ENCODE measurements at regions of chr3 and their contacts with region 1.

Region 1: DNA sequence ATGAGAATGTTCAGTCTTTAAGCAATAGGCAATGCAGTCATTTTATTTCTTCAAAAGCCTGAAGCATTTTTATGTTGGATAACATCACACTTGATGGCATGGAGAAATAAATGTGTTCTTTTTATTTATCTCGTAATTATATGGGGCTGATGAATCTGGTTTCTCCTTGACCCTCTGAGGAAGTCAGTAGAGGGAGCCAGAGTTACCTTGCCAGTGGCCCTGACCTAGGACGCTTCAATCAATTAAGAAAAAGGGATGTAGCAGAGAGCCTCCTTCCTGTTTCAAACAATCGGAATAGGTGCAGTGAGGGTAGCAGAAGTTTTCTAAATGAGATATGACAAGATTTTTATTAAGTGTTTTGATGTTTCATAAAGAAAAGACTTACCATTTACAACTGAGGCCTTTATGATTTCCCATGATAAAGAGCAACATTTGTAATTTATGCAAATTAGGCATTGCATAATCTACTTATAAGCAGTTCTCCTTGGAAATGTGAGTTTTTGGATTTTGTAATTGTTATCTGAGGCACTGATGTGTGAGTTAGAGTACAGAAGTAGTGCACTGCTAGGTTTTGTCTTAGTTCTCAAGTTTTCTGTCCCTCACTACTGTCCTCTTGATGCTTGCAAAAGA is 129.1 kb downstream of the RAP2B start:
- DNase-seq: peak; percentile 12
- ATAC-seq: peak; percentile 65; the same call in 2 of the 3 replicates
- H3K4me3 ChIP-seq: no peak overlapping the region
- H3K27ac ChIP-seq: no peak overlapping the region
- H3K4me1 ChIP-seq: no peaks in the 10 kb centered on the region
- H3K27me3 ChIP-seq: no peaks in the 10 kb centered on the region
- CTCF ChIP-seq: peak; percentile 42; the same call in 1 of the 2 replicates
- EP300 ChIP-seq: no peak
- POLR2A ChIP-seq: no peak
- RAD21 ChIP-seq: no peak

Region 2: DNA sequence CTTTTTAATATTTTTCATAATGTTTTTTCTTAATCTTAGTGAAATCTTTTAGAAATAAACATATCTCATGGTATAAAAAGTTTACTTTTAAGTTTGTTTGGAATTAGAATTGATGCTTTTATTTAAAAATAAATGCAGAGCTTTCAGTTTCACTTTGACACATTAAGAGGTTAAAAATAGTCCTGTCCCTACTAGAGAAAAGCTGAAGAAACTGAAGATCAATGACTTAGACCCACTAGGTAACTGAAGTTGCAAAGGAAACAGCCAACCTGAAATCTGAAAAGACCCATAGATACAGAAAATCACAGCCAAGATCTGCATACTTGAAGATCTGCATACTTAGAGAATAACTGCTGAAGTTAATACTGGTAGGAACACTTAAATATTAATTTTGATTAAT is 108.5 kb after region 1 on chr3:
- CTCF ChIA-PET with region 1: no interaction called
- POLR2A ChIA-PET with region 1: no interaction called
- in situ Hi-C with region 1: no loop called
- intact Hi-C with region 1: no loop called
- DNase-seq: no peak
- ATAC-seq: no peak
- H3K4me3 ChIP-seq: no peak overlapping the region
- H3K27ac ChIP-seq: no peak overlapping the region
- H3K4me1 ChIP-seq: no peaks in the 10 kb centered on the region
- H3K27me3 ChIP-seq: no peaks in the 10 kb centered on the region
- CTCF ChIP-seq: no peak
- EP300 ChIP-seq: no peak
- POLR2A ChIP-seq: no peak
- RAD21 ChIP-seq: no peak

Region 3: DNA sequence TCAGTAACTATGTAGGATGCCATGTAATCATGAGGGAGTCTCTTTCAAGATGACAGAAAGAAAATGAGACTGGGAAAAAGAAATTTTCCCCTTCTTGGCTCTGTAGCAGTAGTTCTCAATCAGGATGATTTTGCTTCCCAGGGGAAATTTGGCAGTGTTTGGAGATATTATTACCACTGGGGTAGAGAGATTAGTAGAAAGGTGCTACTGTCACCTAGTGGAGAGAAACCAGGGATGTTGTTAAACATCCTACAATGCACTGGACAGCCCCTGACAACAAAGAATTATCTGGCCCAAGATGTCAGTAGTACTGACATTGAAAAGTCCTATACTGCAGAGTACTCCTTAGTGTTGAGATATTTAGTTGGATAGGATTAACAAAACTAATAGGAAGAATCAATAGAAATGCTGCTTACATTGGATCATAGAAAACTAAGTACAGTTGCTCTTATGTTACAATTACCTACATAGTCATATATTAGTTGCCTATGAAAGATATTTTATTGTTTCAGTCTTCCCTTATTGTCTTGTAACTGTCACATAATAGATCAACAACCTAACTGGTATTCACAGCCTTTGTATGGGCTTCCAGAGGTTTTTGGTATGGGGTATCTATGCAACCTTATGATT is 304.1 kb after region 1 on chr3:
- CTCF ChIA-PET with region 1: no interaction called
- POLR2A ChIA-PET with region 1: no interaction called
- in situ Hi-C with region 1: no loop called
- intact Hi-C with region 1: loop called (anchors 2 kb)
- DNase-seq: peak; percentile 18
- ATAC-seq: peak; percentile 77
- H3K4me3 ChIP-seq: no peak overlapping the region
- H3K27ac ChIP-seq: no peak overlapping the region
- H3K4me1 ChIP-seq: peaks cover 16% of the 10 kb centered on the region
- H3K27me3 ChIP-seq: no peaks in the 10 kb centered on the region
- CTCF ChIP-seq: peak; percentile 65
- EP300 ChIP-seq: no peak
- POLR2A ChIP-seq: no peak
- RAD21 ChIP-seq: peak; percentile 33; the same call in 1 of the 2 replicates

Region 4: GRCh38 chr3:153768561-153769469 is 477.6 kb after region 1 on chr3:
- CTCF ChIA-PET with region 1: no interaction called
- POLR2A ChIA-PET with region 1: no interaction called
- in situ Hi-C with region 1: no loop called
- intact Hi-C with region 1: loop called (anchors 2 kb)
- DNase-seq: peak; percentile 30
- ATAC-seq: peak; percentile 98
- H3K4me3 ChIP-seq: no peak overlapping the region
- H3K27ac ChIP-seq: no peak overlapping the region
- H3K4me1 ChIP-seq: no peaks in the 10 kb centered on the region
- H3K27me3 ChIP-seq: no peaks in the 10 kb centered on the region
- CTCF ChIP-seq: peak; percentile 83
- EP300 ChIP-seq: no peak
- POLR2A ChIP-seq: no peak
- RAD21 ChIP-seq: peak; percentile 48

Measured in HepG2 (cell line).